IMR-90 (cell line): ENCODE measurements at regions of chr15 and their contacts with region 1.

Region 1: GRCh38 chr15:97909291-97909891 is 51.1 kb upstream of the ARRDC4 start:
- DNase-seq: peak; percentile 50
- ATAC-seq: peak; percentile 100
- H3K4me3 ChIP-seq: no peak overlapping the region
- H3K27ac ChIP-seq: no peak overlapping the region
- H3K4me1 ChIP-seq: no peaks in the 10 kb centered on the region
- H3K27me3 ChIP-seq: no peaks in the 10 kb centered on the region
- CTCF ChIP-seq: peak; percentile 88
- POLR2A ChIP-seq: no peak
- RAD21 ChIP-seq: peak; percentile 89

Region 2: DNA sequence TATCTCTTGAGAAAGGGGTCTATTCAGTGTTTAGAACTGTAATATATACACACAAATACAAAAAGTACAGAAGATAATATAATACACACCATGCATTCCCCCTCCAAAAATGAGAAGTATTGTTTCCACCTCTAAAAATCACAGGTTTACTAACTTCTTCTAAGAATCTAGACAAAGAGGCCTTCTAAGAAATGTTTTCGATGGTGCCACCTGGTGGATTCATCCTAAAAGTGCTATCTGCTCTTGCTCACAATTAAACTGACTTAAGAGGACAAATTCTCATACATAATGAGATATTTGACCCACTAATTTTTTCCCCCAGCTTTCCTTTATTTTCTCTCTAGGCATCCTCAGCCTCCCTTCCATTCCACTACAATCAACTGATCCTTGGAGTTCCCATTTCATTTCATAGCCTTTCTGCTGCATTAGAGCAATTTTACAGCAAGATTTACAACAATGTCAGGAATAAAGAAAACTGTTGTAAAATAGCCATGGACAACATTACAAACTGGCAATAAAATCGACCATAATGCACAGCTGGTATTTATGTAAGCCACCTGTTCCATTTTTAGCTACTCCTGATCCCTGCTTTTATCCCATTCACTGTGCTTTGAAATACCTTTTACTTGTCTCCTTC is 175.7 kb after region 1 on chr15:
- CTCF ChIA-PET with region 1: interaction called, 9 read pairs
- POLR2A ChIA-PET with region 1: no interaction called
- dilution Hi-C with region 1: no loop called
- in situ Hi-C with region 1: loop called (anchors 5 kb)
- intact Hi-C with region 1: loop called (anchors 1 kb)
- DNase-seq: peak; percentile 69
- ATAC-seq: peak; percentile 62
- H3K4me3 ChIP-seq: no peak overlapping the region
- H3K27ac ChIP-seq: no peak overlapping the region
- H3K4me1 ChIP-seq: no peaks in the 10 kb centered on the region
- H3K27me3 ChIP-seq: no peaks in the 10 kb centered on the region
- CTCF ChIP-seq: peak; percentile 71
- POLR2A ChIP-seq: no peak
- RAD21 ChIP-seq: peak; percentile 64

Region 3: GRCh38 chr15:98177924-98178592 is 268.7 kb after region 1 on chr15:
- CTCF ChIA-PET with region 1: no interaction called
- POLR2A ChIA-PET with region 1: no interaction called
- dilution Hi-C with region 1: no loop called
- in situ Hi-C with region 1: no loop called
- intact Hi-C with region 1: loop called (anchors 2 kb)
- DNase-seq: peak; percentile 29
- ATAC-seq: peak; percentile 49
- H3K4me3 ChIP-seq: no peak overlapping the region
- H3K27ac ChIP-seq: no peak overlapping the region
- H3K4me1 ChIP-seq: no peaks in the 10 kb centered on the region
- H3K27me3 ChIP-seq: no peaks in the 10 kb centered on the region
- CTCF ChIP-seq: peak; percentile 50
- POLR2A ChIP-seq: no peak
- RAD21 ChIP-seq: peak; percentile 67

Region 4: GRCh38 chr15:98292442-98293240 is 383.2 kb after region 1 on chr15:
- CTCF ChIA-PET with region 1: interaction called, 3 read pairs
- POLR2A ChIA-PET with region 1: no interaction called
- dilution Hi-C with region 1: no loop called
- in situ Hi-C with region 1: loop called (anchors 5 kb)
- intact Hi-C with region 1: loop called (anchors 1 kb)
- DNase-seq: no peak
- ATAC-seq: peak; percentile 48
- H3K4me3 ChIP-seq: no peak overlapping the region
- H3K27ac ChIP-seq: no peak overlapping the region
- H3K4me1 ChIP-seq: no peaks in the 10 kb centered on the region
- H3K27me3 ChIP-seq: no peaks in the 10 kb centered on the region
- CTCF ChIP-seq: peak; percentile 41
- POLR2A ChIP-seq: no peak
- RAD21 ChIP-seq: no peak

Region 5: DNA sequence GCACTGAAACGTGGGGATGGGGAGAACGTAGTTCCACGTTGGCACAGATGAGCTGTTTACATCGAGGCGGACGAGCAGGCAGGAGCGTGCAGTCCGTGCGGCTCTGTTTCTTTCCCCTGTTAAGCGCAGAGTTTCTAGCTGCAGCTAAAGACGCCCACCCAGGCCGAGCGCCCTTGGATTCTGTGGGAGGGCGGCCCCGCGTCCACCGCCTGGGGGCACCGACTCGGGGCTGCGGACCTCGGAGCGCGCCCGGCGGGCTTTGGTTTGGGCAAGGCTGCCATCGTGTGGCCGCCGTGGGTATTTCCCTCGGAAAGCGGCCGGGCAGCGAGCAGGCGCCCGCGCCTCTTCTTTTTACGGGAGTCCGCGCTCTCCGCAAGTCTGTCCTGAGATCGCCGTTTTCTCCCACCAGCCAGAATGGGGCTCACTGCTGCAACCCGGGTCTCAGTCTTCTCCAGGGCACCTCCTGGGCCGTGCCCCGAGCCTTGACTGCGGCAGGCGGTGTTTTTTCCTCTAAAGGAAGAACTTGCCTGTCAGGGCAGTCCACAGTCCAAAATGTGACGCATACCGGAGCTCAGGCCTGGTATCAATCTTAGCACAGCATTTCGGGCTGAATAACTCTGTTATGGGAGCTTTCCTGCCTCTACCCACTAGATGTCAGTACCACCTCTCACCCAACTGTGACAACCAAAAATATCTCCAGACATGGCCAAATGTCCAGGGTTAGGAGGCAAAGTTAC is 519.0 kb after region 1 on chr15:
- CTCF ChIA-PET with region 1: no interaction called
- POLR2A ChIA-PET with region 1: no interaction called
- dilution Hi-C with region 1: no loop called
- in situ Hi-C with region 1: loop called (anchors 10 kb)
- intact Hi-C with region 1: loop called (anchors 2 kb)
- DNase-seq: peak; percentile 50
- ATAC-seq: peak; percentile 99
- H3K4me3 ChIP-seq: peak overlapping the region; percentile 50
- H3K27ac ChIP-seq: no peak overlapping the region
- H3K4me1 ChIP-seq: no peaks in the 10 kb centered on the region
- H3K27me3 ChIP-seq: peaks cover 18% of the 10 kb centered on the region
- CTCF ChIP-seq: peak; percentile 78
- POLR2A ChIP-seq: no peak
- RAD21 ChIP-seq: peak; percentile 52